Dorsolateral prefrontal cortex (tissue), 120 donors: ENCODE measurements at regions of chr1 and their contacts with region 1.

Region 1: DNA sequence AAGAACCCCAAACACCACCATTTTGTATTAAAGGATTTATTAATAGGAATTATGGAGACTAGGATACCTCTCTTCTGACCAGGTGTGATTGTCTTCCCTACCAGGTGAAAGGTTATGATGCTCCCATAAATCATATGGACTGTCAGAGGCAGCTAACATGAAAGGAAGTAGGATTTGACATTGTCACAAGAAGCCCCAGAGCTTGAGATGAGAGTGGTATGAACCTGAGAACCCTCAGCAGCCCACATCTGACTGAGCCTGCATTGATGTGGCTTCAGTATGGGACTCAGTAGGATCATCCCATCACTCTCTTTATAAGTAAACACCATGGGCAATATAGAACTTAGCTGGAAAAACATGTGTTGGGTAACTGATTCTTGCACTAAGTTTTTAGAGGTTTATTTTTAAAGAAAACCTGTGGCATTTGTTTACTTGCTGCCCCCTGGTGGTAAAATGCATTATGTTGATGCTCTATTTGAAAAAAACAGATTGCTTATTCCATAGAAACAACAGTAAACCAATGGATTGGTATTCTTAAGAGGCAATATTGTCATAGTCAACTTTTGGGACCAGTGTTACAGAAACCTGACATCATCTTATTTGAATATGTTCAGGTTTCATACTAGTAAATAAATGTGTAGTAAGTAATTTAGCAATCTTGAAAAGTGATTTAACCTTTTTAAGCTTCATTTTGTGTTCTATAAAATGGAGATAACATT is 16.6 kb upstream of the CACYBP start:
- DNase-seq: peak in 1 of 10 donors; percentile 46
- H3K4me3 ChIP-seq: no peak overlapping the region
- H3K27ac ChIP-seq: peak overlapping the region in 15 of 59 donors; percentile 1 to 70 (median 22)
- H3K27me3 ChIP-seq: no peaks in the 10 kb centered on the region
- CTCF ChIP-seq: peak; percentile 67 to 89 (median 80)

Region 2: DNA sequence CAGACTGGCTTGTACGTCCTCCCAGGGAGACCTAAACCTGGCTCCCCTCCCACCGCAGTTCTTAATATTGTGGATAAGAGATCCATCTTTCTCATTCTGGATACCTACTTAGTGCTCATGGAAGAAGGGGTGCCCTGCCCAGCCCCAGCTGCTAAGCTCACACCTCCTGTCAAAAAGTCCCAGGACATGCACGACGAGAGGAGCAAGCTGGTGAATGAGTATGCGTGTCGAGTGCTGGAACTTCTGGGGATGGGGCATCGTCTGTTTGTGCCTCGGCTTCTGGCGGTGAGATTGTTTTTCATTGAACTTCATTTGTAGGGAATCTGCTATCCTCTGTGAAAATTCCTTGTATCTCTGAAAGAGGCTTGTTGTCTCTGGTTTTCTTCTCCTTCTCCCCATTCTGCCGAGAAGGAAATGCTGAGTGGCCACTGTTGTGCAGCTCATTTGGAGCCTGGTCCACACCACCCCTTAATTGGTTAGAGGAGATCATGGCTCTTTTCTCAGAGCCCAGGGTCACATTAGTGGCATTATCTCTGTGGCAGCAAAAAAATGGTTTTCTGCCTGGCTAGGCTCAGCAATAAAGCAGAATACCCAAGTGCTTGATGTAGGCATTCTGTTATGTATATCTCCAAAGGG is 182.8 kb before region 1 on chr1:
- intact Hi-C with region 1: loop called in 1 of 2 experiments (anchors 5 kb)
- DNase-seq: peak in 3 of 10 donors; percentile 42 to 53 (median 50)
- H3K4me3 ChIP-seq: peak overlapping the region; percentile 39 to 92 (median 71)
- H3K27ac ChIP-seq: peak overlapping the region; percentile 41 to 97 (median 89)
- H3K27me3 ChIP-seq: no peaks in the 10 kb centered on the region
- CTCF ChIP-seq: no peak

Region 3: GRCh38 chr1:175023043-175023921 is 40.2 kb after region 1 on chr1 and contains the start of gene MRPS14:
- intact Hi-C with region 1: no loop called
- DNase-seq: peak; percentile 89 to 98 (median 96)
- H3K4me3 ChIP-seq: peak within 1 kb of the TSS; percentile 72 to 100 (median 88)
- H3K27ac ChIP-seq: peak within 1 kb of the TSS; percentile 43 to 95 (median 89)
- H3K27me3 ChIP-seq: no peaks in the 10 kb centered on the region
- CTCF ChIP-seq: peak in 33 of 56 donors; percentile 9 to 58 (median 30)
- total RNA-seq, gene MRPS14: 23.2 to 47.2 (median 33.2) TPM

Region 4: DNA sequence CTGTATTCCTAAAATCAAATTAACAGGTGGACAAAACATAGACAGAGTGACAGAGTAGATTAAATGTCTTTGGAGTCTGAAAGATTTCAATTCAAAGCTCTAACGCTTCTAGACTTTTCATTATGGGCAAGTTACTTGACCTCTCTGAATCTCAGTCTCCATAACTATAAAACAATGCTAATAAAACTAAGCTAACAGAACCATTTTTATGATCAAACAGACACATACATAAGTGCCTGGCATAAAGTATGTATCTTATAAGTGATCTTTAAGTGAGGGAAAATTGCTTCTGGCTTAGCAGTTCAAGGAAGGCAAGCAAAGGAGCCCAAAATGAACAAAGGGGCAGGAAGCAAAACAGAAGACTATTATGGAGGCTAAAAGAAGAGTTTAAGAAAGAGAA is 977.0 kb after region 1 on chr1:
- intact Hi-C with region 1: no loop called
- DNase-seq: no peak
- H3K4me3 ChIP-seq: no peak overlapping the region
- H3K27ac ChIP-seq: no peak overlapping the region
- H3K27me3 ChIP-seq: no peaks in the 10 kb centered on the region
- CTCF ChIP-seq: no peak